A549 (cell line): ENCODE measurements at regions of chr11 and their contacts with region 1.

Region 1: GRCh38 chr11:86802601-86803051 is 2.3 kb downstream of the PRSS23 start:
- DNase-seq: peak; percentile 62 to 84
- ATAC-seq: peak; percentile 40 to 70; a peak in 5 of 6 replicates
- H3K4me3 ChIP-seq: peak overlapping the region; percentile 85
- H3K27ac ChIP-seq: peak overlapping the region; percentile 93 to 96
- H3K4me1 ChIP-seq: peaks cover 65% of the 10 kb centered on the region
- CTCF ChIP-seq: peak; percentile 49
- EP300 ChIP-seq: 0 out of 5 replicates have a peak, but pooled peaks of 1 of the 2 experiments have one; percentile 16
- POLR2A ChIP-seq: no peak
- RAD21 ChIP-seq: peak; percentile 59 to 60

Region 2: GRCh38 chr11:86483940-86484794 is 318.5 kb before region 1 on chr11:
- CTCF ChIA-PET with region 1: interaction called, 3 read pairs
- POLR2A ChIA-PET with region 1: interaction called, 17 read pairs
- DNase-seq: peak; percentile 91 to 97
- ATAC-seq: peak; percentile 95
- H3K4me3 ChIP-seq: no peak overlapping the region
- H3K27ac ChIP-seq: peak overlapping the region; percentile 77 to 89
- H3K4me1 ChIP-seq: peaks cover 60% of the 10 kb centered on the region
- CTCF ChIP-seq: no peak
- EP300 ChIP-seq: peak; percentile 94 to 96; a peak in 4 of 5 replicates
- POLR2A ChIP-seq: no peak
- RAD21 ChIP-seq: peak; percentile 19 to 61

Region 3: GRCh38 chr11:86629045-86629706 is 173.4 kb before region 1 on chr11:
- CTCF ChIA-PET with region 1: interaction called, 22 read pairs
- POLR2A ChIA-PET with region 1: no interaction called
- DNase-seq: no peak
- ATAC-seq: no peak
- H3K4me3 ChIP-seq: no peak overlapping the region
- H3K27ac ChIP-seq: peak overlapping the region in 1 of 2 experiments; percentile 3; a peak in 1 of 6 replicates
- H3K4me1 ChIP-seq: peaks cover 15% of the 10 kb centered on the region
- CTCF ChIP-seq: no peak
- EP300 ChIP-seq: no peak
- POLR2A ChIP-seq: no peak
- RAD21 ChIP-seq: no peak

Region 4: DNA sequence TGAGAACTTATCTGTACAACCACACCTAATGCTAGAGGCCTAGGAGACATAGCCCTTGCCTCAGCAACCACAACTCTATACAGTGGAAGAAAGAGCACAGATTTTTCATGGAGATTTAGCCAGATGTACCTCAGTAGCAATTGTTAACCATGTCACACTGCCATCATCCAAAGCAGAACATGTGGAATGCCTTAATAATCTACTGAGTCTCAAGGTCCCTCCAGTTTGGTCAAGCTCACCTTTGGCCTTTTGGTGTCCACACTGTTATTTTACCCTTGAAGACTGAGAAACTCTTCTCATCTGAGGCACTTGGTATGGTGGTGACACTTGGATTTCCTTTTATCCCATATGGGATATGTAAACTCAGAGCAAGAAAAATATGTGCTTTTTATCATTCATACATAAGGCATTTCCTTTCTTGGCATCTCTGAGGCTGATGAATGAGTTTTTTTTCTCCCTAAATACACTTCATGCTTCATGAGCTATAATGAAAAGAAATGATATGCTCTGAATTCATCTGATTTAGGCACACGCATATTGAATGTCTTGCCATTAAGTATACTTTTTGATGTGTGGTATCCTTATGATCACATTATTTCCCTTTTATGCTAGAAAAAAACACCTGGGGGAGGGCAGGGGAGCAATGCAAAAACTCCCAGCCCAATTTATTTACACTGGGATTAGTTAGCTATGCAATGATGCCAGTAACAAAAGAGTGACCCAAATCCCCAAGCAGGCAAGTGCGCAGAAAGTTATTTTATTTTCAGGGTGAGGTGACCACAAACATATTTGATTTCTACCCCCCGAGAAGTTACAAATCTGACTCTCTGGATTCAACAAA is 66.9 kb before region 1 on chr11:
- CTCF ChIA-PET with region 1: interaction called, 29 read pairs
- POLR2A ChIA-PET with region 1: interaction called, 32 read pairs
- DNase-seq: peak; percentile 66 to 95
- ATAC-seq: peak; percentile 48 to 74
- H3K4me3 ChIP-seq: no peak overlapping the region; the same call in 2 of the 3 replicates
- H3K27ac ChIP-seq: peak overlapping the region; percentile 88 to 93
- H3K4me1 ChIP-seq: peaks cover 83% of the 10 kb centered on the region
- CTCF ChIP-seq: no peak
- EP300 ChIP-seq: peak; percentile 96 to 99; a peak in 4 of 5 replicates
- POLR2A ChIP-seq: no peak
- RAD21 ChIP-seq: peak; percentile 32 to 64

Region 5: GRCh38 chr11:86790073-86790727 is 12.4 kb before region 1 on chr11:
- CTCF ChIA-PET with region 1: interaction called, 11 read pairs
- POLR2A ChIA-PET with region 1: interaction called, 28 read pairs
- DNase-seq: peak in 1 of 2 experiments; percentile 85
- ATAC-seq: peak; percentile 41 to 75; a peak in 3 of 6 replicates
- H3K4me3 ChIP-seq: no peak overlapping the region
- H3K27ac ChIP-seq: peak overlapping the region; percentile 44 to 76; a peak in 5 of 6 replicates
- H3K4me1 ChIP-seq: peaks cover 19% of the 10 kb centered on the region
- CTCF ChIP-seq: no peak
- EP300 ChIP-seq: peak in 1 of 2 experiments; percentile 75; a peak in 2 of 5 replicates
- POLR2A ChIP-seq: no peak
- RAD21 ChIP-seq: no peak